ENCODE measurements at regions of chr9 and their contacts with region 1.

Region 1: DNA sequence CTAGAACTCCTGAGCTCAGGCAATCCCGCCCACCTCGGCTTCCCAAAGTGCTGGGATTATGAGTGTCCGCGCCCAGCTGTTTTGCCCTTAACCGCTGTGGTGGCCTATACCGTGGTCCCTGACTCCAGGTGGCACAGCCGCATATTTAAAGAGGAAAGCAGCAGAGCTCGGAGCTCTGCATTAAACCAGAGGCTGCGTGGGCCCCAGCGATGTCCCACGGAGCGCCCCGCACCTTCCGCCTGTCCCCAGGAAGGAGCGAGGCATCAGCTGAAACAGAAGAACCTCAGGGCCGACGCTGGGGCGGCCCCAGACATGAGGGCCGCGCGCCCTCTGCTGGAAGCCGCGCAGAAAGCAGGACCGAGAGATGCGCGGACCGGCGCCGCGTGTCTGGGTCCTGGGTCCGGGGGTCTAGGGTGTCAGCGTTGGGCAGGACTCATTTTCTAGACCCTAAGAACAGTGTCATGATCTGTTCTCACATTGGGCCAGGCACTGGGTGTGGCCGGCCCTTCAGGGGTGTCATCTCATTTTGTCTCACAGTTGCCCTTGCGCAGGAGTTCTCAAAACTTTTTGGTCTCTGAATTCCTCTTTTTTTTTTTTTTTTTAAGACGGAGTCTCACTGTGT is 37.7 kb downstream of the LAMC3 start:
- DNase-seq: peak; percentile 80
- ATAC-seq: peak; percentile 94
- H3K4me3 Mint-ChIP-seq: no peak overlapping the region
- H3K27ac Mint-ChIP-seq: no peak overlapping the region
- H3K4me1 Mint-ChIP-seq: no peaks in the 10 kb centered on the region
- H3K27me3 Mint-ChIP-seq: no peaks in the 10 kb centered on the region
- CTCF ChIP-seq: peak; percentile 98

Region 2: DNA sequence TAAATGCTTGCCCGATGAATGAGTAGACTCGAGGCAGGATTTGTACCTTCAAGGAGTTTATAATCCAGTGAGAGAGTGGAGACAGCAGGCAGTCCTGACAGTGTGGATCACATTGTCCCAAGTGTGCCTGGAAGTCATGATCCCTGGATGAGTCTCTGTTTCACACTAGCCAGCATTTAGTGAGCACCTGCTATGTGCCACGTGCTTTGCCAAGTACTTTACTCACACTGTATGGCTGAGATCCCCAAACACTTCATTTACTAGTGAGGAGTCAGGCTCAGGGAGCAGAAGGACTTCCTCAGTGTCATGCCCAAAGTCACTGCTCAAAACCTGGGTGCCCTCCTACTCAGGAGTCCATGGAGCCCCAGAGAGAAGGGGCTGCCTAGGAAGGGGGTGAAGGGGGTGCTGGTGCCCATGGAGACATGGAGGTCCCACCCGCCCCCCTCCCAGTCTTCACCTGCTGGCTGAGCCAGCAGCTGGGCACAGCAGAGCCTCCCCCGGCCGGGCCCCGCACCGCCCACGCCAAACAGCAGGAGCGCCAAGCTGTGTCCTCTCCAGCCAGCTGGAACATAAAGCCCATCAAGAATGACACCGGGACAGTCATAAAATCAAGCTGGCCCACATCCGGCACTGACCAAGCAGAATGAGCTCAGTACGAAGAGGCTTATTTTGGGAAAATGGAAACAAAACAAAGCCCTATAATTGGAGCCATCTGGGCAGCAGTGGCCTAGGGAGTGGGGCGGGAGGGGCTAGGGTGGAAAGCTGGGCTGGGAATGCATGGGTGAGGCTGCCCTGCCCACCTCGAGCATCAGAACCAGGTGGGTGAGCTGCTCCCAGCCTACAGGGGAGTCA is 27.1 kb before region 1 on chr9:
- CTCF ChIA-PET with region 1: interaction called, 12 read pairs
- POLR2A ChIA-PET with region 1: no interaction called
- intact Hi-C with region 1: no loop called
- DNase-seq: no peak
- ATAC-seq: no peak
- H3K4me3 Mint-ChIP-seq: no peak overlapping the region
- H3K27ac Mint-ChIP-seq: no peak overlapping the region
- H3K4me1 Mint-ChIP-seq: no peaks in the 10 kb centered on the region
- H3K27me3 Mint-ChIP-seq: peaks cover 15% of the 10 kb centered on the region
- CTCF ChIP-seq: no peak

Region 3: DNA sequence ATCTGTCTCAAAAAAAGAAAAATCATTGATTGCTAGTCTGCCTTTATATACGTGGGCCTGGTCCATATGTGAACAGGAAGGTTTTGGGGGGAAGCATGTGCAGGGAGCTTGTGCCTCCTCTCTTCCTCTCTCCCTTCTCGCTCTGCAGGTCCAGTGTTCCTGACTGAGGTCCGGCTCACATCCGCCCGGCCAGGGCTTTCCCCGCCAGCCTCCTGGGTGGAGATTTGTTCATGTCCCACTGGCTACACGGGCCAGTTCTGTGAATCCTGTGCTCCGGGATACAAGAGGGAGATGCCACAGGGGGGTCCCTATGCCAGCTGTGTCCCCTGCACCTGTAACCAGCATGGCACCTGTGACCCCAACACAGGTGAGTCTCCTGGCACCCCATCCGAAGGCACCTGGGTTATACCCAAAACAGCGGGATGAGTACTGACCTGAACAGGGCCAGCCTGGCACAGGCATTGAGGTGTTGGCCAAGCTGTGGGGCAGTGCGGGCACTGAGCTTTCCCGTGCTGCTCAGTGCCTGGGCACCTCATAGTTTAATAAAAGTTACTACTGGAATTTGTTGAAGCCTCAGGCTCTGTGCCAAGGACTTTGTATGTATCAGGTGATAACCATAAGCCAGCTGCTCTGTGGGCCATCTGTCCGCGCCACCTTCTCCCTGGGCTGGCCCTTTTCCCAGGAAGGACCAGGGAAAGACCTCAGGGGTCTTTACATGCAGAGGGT is 10.3 kb after region 1 on chr9:
- CTCF ChIA-PET with region 1: interaction called, 19 read pairs
- POLR2A ChIA-PET with region 1: no interaction called
- intact Hi-C with region 1: no loop called
- DNase-seq: no peak
- ATAC-seq: no peak
- H3K4me3 Mint-ChIP-seq: no peak overlapping the region
- H3K27ac Mint-ChIP-seq: no peak overlapping the region
- H3K4me1 Mint-ChIP-seq: no peaks in the 10 kb centered on the region
- H3K27me3 Mint-ChIP-seq: no peaks in the 10 kb centered on the region
- CTCF ChIP-seq: no peak

Region 4: DNA sequence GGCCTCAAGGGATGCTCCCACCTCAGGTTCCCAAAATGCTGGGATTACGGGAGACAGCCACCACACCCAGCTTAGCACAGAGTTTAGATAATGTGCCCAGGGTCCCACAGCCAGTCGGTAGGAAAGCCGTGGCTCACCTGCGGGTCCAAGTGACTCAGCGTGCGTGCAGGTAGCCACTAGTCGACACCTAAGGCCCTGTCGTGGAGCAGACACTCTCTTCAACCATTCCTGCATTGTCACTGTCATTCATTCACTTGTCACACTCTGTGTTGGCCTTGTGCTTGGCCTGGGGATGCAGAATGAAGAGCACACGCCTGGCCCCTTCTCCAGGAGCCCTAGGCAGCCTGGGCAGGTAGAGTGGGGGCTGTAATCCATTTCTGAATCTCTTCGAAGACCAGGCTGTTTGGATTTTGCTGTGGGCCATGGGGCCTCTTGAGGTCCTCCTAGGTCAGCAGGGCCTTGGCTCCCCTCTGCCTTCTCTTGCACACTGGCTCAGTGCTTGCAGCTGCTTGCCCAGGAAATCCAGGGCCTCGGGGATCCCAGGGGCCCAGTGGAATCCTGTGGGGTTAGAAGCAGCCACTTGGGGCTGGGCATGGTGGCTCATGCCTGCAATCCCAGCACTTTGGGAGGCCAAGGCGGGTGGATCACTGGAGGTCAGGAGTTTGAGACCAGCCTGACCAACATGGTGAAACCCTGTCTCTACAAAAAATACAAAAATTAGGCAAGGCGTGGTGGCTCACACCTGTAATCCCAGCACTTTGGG is 43.5 kb after region 1 on chr9:
- CTCF ChIA-PET with region 1: no interaction called
- POLR2A ChIA-PET with region 1: no interaction called
- intact Hi-C with region 1: no loop called
- DNase-seq: no peak
- ATAC-seq: no peak
- H3K4me3 Mint-ChIP-seq: no peak overlapping the region
- H3K27ac Mint-ChIP-seq: no peak overlapping the region
- H3K4me1 Mint-ChIP-seq: no peaks in the 10 kb centered on the region
- H3K27me3 Mint-ChIP-seq: peaks cover 11% of the 10 kb centered on the region
- CTCF ChIP-seq: no peak